CD14-positive monocyte (primary cell): ENCODE measurements at regions of chr1 and their contacts with region 1.

Region 1: GRCh38 chr1:12184008-12184681 is 17.4 kb downstream of the TNFRSF1B start:
- DNase-seq: peak; percentile 95 to 98 (median 96)
- H3K4me3 ChIP-seq: peak overlapping the region; percentile 9 to 79 (median 46)
- H3K4me3 Mint-ChIP-seq: peak overlapping the region; percentile 83 to 94
- H3K27ac ChIP-seq: peak overlapping the region; percentile 96 to 100
- H3K27ac Mint-ChIP-seq: peak overlapping the region; percentile 98 to 100 (median 99)
- H3K4me1 ChIP-seq: peaks cover 92 to 100% of the 10 kb centered on the region in 2 donors
- H3K4me1 Mint-ChIP-seq: peaks cover 98% of the 10 kb centered on the region
- H3K27me3 ChIP-seq: no peaks in the 10 kb centered on the region
- H3K27me3 Mint-ChIP-seq: peaks cover 0 to 2% (median 0%) of the 10 kb centered on the region in 3 donors
- CTCF ChIP-seq: peak; percentile 46

Region 2: GRCh38 chr1:12132092-12132491 is 52.1 kb before region 1 on chr1:
- intact Hi-C with region 1: loop called in 1 of 2 experiments (anchors 2 kb)
- DNase-seq: peak; percentile 46 to 75 (median 66)
- H3K4me3 ChIP-seq: peak overlapping the region in 1 of 3 experiments; percentile 31
- H3K4me3 Mint-ChIP-seq: peak overlapping the region in 1 of 2 donors; percentile 26
- H3K27ac ChIP-seq: peak overlapping the region; percentile 90 to 93
- H3K27ac Mint-ChIP-seq: peak overlapping the region; percentile 93 to 97 (median 96)
- H3K4me1 ChIP-seq: peaks cover 62 to 64% of the 10 kb centered on the region in 2 donors
- H3K4me1 Mint-ChIP-seq: peaks cover 64% of the 10 kb centered on the region
- H3K27me3 ChIP-seq: no peaks in the 10 kb centered on the region
- H3K27me3 Mint-ChIP-seq: peaks cover 0 to 2% (median 0%) of the 10 kb centered on the region in 3 donors
- CTCF ChIP-seq: no peak

Region 3: DNA sequence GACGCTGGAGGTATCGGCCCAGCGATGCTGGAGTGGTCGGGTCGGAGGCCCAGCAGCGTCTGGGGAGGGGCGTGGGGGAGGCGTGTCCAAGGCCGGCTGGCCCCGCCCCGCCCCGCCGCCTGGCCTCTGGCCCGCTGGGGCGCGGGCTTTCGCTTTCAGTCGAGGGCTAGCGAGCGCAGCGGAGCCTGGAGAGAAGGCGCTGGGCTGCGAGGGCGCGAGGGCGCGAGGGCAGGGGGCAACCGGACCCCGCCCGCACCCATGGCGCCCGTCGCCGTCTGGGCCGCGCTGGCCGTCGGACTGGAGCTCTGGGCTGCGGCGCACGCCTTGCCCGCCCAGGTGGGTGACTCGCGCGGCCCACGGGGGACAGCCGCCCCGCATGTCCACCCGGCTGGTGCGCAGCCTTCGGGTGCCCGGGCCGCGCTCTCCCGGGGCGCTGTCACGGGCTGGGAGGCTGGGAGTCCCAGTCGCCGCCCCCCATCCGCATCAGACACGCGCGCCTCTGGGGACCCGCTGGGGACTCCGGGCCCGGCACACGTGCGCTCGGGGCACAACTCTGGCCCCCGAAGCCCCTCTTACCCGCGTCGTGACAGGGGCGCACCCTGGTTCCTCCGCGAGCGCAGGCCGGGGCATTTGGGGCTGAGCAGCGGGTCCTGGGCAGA is 17.2 kb before region 1 on chr1 and contains the start of gene TNFRSF1B:
- intact Hi-C with region 1: loop called in 1 of 2 experiments (anchors 2 kb)
- DNase-seq: peak; percentile 75 to 88 (median 81)
- H3K4me3 ChIP-seq: peak within 1 kb of the TSS; percentile 89 to 98 (median 98)
- H3K4me3 Mint-ChIP-seq: peak within 1 kb of the TSS; percentile 100
- H3K27ac ChIP-seq: peak within 1 kb of the TSS; percentile 87 to 88
- H3K27ac Mint-ChIP-seq: peak within 1 kb of the TSS; percentile 97 to 100 (median 99)
- H3K4me1 ChIP-seq: peaks cover 81 to 85% of the 10 kb centered on the region in 2 donors
- H3K4me1 Mint-ChIP-seq: peaks cover 78% of the 10 kb centered on the region
- H3K27me3 ChIP-seq: no peaks in the 10 kb centered on the region
- H3K27me3 Mint-ChIP-seq: peaks cover 0 to 4% (median 3%) of the 10 kb centered on the region in 3 donors
- CTCF ChIP-seq: no peak
- polyA plus RNA-seq, gene TNFRSF1B: 436 to 761 (median 450) TPM

Region 4: DNA sequence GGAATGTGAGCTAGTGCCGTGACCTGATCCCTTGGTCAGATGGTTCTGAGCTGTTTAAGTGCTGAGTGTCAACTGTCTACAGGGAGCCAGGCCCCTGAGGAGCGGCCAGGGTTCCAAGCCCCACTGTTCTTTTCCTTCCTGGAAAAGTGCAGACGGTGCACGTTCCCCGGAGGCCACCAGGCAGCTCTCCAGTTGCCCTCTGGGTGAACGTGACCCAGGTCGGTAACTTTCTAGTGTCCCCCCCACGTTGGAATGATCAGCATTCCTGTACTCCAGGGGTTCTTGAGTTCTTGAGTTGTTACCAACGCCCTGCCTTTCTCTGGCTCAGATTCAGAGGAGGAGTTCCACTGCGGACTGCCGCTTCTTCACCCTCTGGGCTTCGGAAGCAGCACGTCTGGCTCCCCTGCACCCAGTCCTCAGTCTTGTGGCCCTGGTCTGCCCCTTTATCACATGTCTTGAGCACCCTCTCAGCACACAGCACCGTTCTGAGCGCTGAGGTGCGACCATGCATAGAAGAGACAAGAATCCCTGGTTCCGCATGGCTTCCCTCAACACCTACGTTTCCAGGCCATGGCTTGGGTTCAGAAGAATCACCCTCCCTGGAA is 302.4 kb after region 1 on chr1:
- intact Hi-C with region 1: no loop called
- DNase-seq: no peak
- H3K4me3 ChIP-seq: no peak overlapping the region
- H3K4me3 Mint-ChIP-seq: no peak overlapping the region
- H3K27ac ChIP-seq: no peak overlapping the region
- H3K27ac Mint-ChIP-seq: peak overlapping the region in 1 of 7 donors; percentile 34
- H3K4me1 ChIP-seq: peaks cover 0 to 3% of the 10 kb centered on the region in 2 donors
- H3K4me1 Mint-ChIP-seq: no peaks in the 10 kb centered on the region
- H3K27me3 ChIP-seq: no peaks in the 10 kb centered on the region
- H3K27me3 Mint-ChIP-seq: no peaks in the 10 kb centered on the region
- CTCF ChIP-seq: no peak